OCI-LY7 (cell line): ENCODE measurements at regions of chr6 and their contacts with region 1.

Region 1: DNA sequence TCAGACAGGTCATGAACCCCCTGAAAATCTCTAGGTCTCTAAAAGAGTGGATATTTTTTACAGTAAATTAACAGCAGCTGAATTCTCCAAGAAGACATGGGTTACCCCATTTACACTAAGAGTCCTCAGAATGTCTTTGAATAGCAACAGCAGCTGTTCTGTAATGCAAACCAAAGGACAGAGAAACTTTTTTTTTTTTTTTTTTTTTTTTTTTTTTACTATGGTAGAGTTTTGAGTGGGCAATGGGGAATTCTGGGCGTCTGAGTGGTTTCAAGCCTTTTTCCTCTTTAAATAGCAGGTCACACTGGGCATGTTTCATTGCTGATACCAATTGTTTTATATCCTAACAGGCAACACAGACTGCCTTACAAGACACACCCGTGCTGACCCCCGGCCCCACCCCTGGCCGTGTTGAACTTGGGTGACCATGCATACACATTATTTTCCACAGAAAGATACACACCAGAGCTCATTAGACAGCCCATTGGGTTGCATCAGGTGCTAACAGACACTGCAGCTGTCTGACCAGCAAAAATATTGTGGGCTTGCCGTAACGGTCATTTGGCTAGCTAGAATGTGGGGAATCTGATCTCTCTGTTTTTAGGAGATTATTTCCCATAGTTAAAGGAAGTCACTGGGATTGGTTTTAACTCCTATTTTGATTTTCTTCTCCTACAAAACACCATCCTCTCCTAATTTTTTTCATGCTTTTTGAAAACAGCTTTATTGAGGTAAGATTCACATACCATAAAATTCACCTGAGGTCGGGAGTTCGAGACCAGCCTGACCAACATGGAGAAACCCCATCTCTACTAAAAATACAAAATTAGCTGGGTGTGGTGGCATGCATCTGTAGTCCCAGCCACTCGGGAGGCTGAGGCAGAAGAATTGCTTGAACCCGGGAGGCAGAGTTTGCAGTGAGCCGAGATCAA is 26.7 kb upstream of the IRF4 start:
- DNase-seq: peak; percentile 97
- H3K4me3 ChIP-seq: peak overlapping the region; percentile 45
- H3K27ac ChIP-seq: peak overlapping the region; percentile 95
- H3K4me1 ChIP-seq: peaks cover 84% of the 10 kb centered on the region
- CTCF ChIP-seq: no peak

Region 2: DNA sequence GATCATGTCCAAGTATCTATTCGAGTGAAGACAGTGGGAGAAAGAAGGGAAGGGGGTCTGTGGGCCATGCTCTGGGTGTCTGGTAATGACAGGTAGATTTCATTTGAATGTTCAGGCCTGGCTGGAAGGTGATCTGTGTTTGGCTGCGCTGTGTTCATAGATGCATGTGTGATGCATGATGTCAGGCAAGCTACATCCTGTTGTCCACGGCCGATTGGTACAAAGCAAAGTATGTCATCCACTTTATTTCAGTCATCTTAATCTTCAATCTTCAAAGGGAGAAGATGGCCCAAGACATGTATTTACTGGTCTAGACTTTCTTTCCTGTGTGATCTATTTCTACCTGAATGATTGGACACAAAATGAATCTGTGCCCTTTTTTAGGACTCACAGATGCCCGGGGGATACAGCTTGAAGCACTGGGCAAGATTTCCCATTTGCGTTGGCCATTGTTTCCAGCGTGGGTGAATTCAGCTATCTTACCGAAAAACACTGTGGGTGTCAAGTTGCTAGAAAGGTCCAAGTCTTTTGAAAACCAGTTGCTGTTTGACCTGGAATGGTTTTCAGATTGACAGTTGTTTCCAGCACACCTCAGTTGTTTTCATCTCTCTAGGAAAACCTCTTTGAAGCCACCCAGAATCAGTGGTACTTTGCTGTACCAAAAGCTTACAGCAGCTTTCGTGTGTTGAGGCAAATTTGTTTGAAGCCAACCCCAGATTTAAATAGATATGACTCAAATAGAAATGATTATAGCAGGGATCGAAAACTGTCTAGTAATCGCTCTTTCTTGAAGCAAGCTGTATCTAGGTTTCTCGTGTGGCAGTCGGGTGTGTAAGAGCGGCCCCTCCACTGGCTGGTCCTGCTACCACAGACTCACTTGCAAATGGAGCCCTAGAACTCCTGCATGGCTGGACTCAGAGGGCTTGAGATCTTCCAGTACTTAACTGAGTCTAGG is 45.4 kb before region 1 on chr6:
- CTCF ChIA-PET with region 1: interaction called, 8 read pairs
- POLR2A ChIA-PET with region 1: interaction called, 42 read pairs
- intact Hi-C with region 1: no loop called
- DNase-seq: no peak
- H3K4me3 ChIP-seq: no peak overlapping the region
- H3K27ac ChIP-seq: no peak overlapping the region
- H3K4me1 ChIP-seq: peaks cover 100% of the 10 kb centered on the region
- CTCF ChIP-seq: no peak

Region 3: DNA sequence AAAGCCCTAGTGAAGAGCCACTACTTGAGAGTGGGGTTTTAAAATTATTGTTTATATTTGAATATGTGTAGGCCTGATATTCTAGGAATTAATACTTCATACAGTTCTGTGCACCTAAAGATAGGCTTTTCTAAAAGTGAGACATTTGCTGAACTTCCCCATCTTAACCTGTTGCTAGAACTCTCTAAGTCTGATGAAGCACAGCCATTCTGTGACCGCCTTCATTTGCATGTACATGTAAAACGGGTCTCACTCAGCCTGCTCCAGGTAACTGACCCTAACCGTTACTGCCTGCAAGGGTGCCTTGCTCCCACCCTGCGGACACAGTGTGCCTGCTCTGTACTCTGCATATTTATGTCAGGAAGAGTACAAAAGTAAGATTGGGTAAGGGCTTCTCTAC is 17.6 kb before region 1 on chr6:
- CTCF ChIA-PET with region 1: interaction called, 14 read pairs
- POLR2A ChIA-PET with region 1: interaction called, 41 read pairs
- intact Hi-C with region 1: no loop called
- DNase-seq: peak; percentile 87
- H3K4me3 ChIP-seq: peak overlapping the region; percentile 10
- H3K27ac ChIP-seq: peak overlapping the region; percentile 77
- H3K4me1 ChIP-seq: peaks cover 62% of the 10 kb centered on the region
- CTCF ChIP-seq: no peak

Region 4: GRCh38 chr6:386688-387266 is 21.9 kb after region 1 on chr6:
- CTCF ChIA-PET with region 1: interaction called, 9 read pairs
- POLR2A ChIA-PET with region 1: interaction called, 47 read pairs
- intact Hi-C with region 1: loop called (anchors 2 kb)
- DNase-seq: no peak
- H3K4me3 ChIP-seq: no peak overlapping the region
- H3K27ac ChIP-seq: no peak overlapping the region
- H3K4me1 ChIP-seq: peaks cover 25% of the 10 kb centered on the region
- CTCF ChIP-seq: no peak

Region 5: GRCh38 chr6:1039191-1039590 is 674.3 kb after region 1 on chr6:
- CTCF ChIA-PET with region 1: no interaction called
- POLR2A ChIA-PET with region 1: no interaction called
- intact Hi-C with region 1: no loop called
- DNase-seq: no peak
- H3K4me3 ChIP-seq: no peak overlapping the region
- H3K27ac ChIP-seq: no peak overlapping the region
- H3K4me1 ChIP-seq: no peaks in the 10 kb centered on the region
- CTCF ChIP-seq: no peak